CD4-positive, alpha-beta T cell (primary cell): ENCODE measurements at regions of chr1 and their contacts with region 1.

Region 1: DNA sequence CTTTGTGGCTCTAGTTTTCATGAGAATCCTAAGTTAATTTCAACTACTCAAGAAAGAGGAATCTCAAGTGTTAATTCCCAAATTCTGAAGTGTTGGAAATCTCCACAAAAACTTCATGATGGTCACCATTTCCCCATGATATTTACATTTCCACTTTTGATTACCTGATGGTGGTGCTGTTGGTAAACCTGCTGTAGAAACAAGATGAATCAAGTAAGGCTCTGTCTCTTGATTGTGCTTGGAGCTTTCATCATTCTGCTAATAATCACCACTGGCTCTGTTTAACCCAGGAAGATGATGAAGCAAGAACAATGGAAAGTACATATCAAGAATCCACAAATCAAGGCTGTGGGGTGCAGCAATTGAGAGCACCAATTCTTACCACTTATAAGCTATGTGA is 77.8 kb downstream of the C4BPA start:
- DNase-seq: peak in 3 of 14 experiments; percentile 30 to 47 (median 42)
- ATAC-seq: no peak
- H3K4me3 ChIP-seq: no peak overlapping the region
- H3K4me3 Mint-ChIP-seq: no peak overlapping the region
- H3K27ac ChIP-seq: no peak overlapping the region
- H3K27ac Mint-ChIP-seq: no peak overlapping the region
- H3K4me1 ChIP-seq: no peaks in the 10 kb centered on the region
- H3K4me1 Mint-ChIP-seq: no peaks in the 10 kb centered on the region
- H3K27me3 ChIP-seq: no peaks in the 10 kb centered on the region
- H3K27me3 Mint-ChIP-seq: peaks cover 11% of the 10 kb centered on the region
- CTCF ChIP-seq: peak; percentile 55

Region 2: DNA sequence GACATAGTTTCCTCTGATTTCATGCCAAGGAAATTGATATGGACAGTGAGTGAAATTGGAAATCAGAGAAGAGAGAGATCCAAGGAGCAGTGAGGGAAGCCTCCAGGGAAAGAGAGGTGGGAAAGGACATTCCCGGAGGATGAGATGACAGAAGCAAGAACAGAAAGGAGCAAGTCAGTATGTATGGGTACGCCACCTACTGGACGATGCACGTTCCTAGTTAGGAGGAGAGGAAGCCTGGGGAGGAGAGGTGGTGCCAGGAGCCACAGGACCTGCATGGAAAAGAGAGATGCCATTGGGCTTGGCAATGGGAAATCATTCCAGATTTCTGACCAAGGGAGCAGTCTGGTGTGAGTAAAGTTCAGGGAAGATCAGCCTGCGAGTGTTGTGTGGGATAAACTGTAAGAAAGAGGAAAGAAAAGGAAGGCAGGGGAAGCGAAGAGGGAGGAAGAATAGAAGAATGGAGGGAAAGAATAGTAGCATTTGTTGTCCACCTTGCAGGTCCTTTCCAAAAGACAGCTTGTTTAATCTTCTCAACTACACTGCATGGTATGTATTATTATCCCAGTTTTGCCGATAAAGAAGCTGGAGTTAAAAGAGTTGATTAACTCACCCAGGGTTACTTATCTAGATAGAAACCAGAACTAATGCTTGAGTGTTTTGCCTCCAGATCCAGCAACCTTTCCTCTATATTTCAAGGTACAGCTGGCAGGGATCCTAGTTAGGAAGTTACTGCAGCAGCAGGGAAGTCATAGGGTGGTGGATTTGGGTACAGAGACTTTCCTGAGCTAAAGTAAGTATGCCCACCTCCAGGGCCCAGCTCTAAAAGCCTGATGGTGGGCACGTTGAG is 176.6 kb before region 1 on chr1:
- CTCF ChIA-PET with region 1: no interaction called
- POLR2A ChIA-PET with region 1: no interaction called
- intact Hi-C with region 1: no loop called
- DNase-seq: peak; percentile 7 to 63 (median 20)
- ATAC-seq: no peak
- H3K4me3 ChIP-seq: no peak overlapping the region
- H3K4me3 Mint-ChIP-seq: no peak overlapping the region
- H3K27ac ChIP-seq: no peak overlapping the region
- H3K27ac Mint-ChIP-seq: no peak overlapping the region
- H3K4me1 ChIP-seq: no peaks in the 10 kb centered on the region
- H3K4me1 Mint-ChIP-seq: no peaks in the 10 kb centered on the region
- H3K27me3 ChIP-seq: no peaks in the 10 kb centered on the region
- H3K27me3 Mint-ChIP-seq: peaks cover 3% of the 10 kb centered on the region
- CTCF ChIP-seq: peak; percentile 76

Region 3: DNA sequence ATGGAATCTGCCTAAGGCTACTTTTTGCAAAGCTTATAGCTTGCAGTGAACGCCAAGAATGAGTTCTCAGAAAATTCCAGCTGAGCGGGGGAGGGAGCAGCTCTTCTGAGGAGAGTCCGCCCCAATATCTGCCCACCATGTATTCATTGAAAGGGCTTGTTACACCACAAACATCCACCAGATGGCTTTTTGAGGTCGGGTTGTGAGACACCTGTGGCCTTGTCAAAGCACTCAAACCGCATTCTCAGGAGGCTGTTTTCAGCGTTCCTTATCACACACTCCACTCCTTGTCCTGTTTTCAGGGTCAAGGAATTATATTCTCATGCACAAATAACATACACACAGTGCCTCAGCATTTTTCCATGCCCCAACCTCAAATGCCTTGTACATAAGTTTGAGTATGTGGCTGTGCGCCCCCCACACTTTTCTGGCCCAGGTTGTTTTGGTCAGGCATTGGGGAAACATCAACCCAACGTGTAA is 97.1 kb before region 1 on chr1:
- CTCF ChIA-PET with region 1: no interaction called
- POLR2A ChIA-PET with region 1: no interaction called
- intact Hi-C with region 1: loop called in 1 of 2 experiments (anchors 5 kb)
- DNase-seq: peak; percentile 19 to 83 (median 40)
- ATAC-seq: peak; percentile 77
- H3K4me3 ChIP-seq: no peak overlapping the region
- H3K4me3 Mint-ChIP-seq: no peak overlapping the region
- H3K27ac ChIP-seq: no peak overlapping the region
- H3K27ac Mint-ChIP-seq: no peak overlapping the region
- H3K4me1 ChIP-seq: peaks cover 10% of the 10 kb centered on the region
- H3K4me1 Mint-ChIP-seq: peaks cover 21% of the 10 kb centered on the region
- H3K27me3 ChIP-seq: no peaks in the 10 kb centered on the region
- H3K27me3 Mint-ChIP-seq: peaks cover 35% of the 10 kb centered on the region
- CTCF ChIP-seq: peak; percentile 68

Region 4: DNA sequence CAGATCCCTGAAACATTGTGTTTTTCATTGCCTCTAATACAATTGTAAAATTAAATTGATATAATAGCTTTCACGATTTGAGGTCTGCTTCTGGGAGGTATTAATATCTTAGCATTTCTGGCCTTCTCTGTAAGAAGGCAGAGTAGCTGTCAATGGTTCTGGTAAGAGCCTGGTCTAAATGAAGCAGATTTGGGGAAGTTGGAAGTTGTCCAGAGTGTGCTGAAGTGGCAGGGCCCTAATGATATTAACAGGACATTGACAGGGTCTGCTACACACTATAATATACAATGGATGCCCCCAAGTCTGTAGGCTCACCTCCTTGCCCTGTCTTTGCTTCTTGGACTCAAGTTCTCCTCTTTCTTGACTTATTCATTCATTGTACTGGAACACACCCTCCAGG is 21.7 kb after region 1 on chr1:
- CTCF ChIA-PET with region 1: no interaction called
- POLR2A ChIA-PET with region 1: no interaction called
- intact Hi-C with region 1: loop called in 1 of 2 experiments (anchors 2 kb)
- DNase-seq: no peak
- ATAC-seq: no peak
- H3K4me3 ChIP-seq: no peak overlapping the region
- H3K4me3 Mint-ChIP-seq: no peak overlapping the region
- H3K27ac ChIP-seq: no peak overlapping the region
- H3K27ac Mint-ChIP-seq: no peak overlapping the region
- H3K4me1 ChIP-seq: peaks cover 4% of the 10 kb centered on the region
- H3K4me1 Mint-ChIP-seq: peaks cover 5% of the 10 kb centered on the region
- H3K27me3 ChIP-seq: no peaks in the 10 kb centered on the region
- H3K27me3 Mint-ChIP-seq: peaks cover 2% of the 10 kb centered on the region
- CTCF ChIP-seq: no peak

Region 5: DNA sequence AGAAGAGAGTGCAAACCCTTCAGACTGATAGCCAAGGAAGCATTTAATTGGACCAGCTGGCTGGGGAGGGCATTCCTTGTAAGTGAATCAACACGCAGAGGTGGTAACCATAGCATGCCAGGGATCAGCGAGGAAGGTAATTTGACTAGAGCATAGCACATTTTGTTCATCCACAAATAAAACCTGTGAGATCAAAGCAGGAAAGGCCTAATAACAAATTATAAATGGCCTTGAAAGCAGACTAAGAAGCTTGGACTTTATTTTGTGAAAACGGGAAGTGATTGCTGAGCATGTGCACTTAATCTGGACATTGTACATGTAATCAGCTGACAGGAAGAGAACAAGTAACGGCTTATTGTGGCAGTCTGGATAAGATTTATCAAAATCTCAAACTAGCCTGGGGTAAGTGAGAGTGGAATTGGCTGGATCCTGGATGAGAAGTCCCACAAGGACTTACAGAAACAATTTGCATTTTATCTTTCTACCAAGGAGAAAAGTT is 128.0 kb after region 1 on chr1:
- CTCF ChIA-PET with region 1: no interaction called
- POLR2A ChIA-PET with region 1: no interaction called
- intact Hi-C with region 1: loop called in 1 of 2 experiments (anchors 10 kb)
- DNase-seq: peak in 2 of 14 experiments; percentile 22 to 26
- ATAC-seq: no peak
- H3K4me3 ChIP-seq: no peak overlapping the region
- H3K4me3 Mint-ChIP-seq: peak overlapping the region; percentile 32
- H3K27ac ChIP-seq: no peak overlapping the region
- H3K27ac Mint-ChIP-seq: peak overlapping the region; percentile 70
- H3K4me1 ChIP-seq: peaks cover 5% of the 10 kb centered on the region
- H3K4me1 Mint-ChIP-seq: peaks cover 22% of the 10 kb centered on the region
- H3K27me3 ChIP-seq: no peaks in the 10 kb centered on the region
- H3K27me3 Mint-ChIP-seq: no peaks in the 10 kb centered on the region
- CTCF ChIP-seq: no peak

Region 6: DNA sequence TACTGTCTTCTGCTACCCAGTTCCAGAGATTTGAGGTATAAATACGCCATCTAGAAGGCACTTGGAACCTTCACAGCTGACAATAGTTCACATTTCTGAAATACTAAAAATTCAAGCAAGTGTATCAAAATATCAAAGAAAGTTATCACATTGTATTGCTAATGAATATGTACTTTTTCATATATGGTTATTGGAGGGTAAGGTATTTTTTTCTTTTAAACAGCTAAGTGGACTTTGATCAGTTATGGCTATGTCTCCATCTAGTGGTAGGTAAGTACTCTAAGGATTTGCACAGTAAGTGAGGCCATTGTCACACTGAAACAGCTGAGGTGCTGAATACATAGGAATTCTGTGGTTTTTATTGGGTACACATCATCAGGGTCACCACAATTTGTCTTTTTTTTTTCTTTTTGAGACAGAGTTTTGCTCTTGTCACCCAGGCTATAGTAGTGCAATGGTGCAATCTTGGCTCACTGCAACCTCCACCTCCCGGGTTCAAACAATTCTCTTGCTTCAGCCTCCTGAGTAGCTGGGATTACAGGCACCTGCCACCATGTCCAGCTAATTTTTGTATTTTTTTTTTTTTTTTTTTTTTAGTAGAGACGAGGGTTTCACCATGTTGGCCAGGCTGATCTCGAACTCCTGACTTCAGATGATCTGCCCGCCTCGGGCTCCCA is 223.1 kb after region 1 on chr1:
- CTCF ChIA-PET with region 1: interaction called, 17 read pairs
- POLR2A ChIA-PET with region 1: interaction called, 3 read pairs
- intact Hi-C with region 1: loop called (anchors 1 to 2 kb)
- DNase-seq: peak in 4 of 14 experiments; percentile 11 to 79 (median 72)
- ATAC-seq: peak; percentile 79
- H3K4me3 ChIP-seq: no peak overlapping the region
- H3K4me3 Mint-ChIP-seq: no peak overlapping the region
- H3K27ac ChIP-seq: no peak overlapping the region
- H3K27ac Mint-ChIP-seq: no peak overlapping the region
- H3K4me1 ChIP-seq: no peaks in the 10 kb centered on the region
- H3K4me1 Mint-ChIP-seq: no peaks in the 10 kb centered on the region
- H3K27me3 ChIP-seq: no peaks in the 10 kb centered on the region
- H3K27me3 Mint-ChIP-seq: no peaks in the 10 kb centered on the region
- CTCF ChIP-seq: peak; percentile 81

Region 7: GRCh38 chr1:208054485-208054884 is 872.6 kb after region 1 on chr1:
- CTCF ChIA-PET with region 1: no interaction called
- POLR2A ChIA-PET with region 1: no interaction called
- intact Hi-C with region 1: no loop called
- DNase-seq: no peak
- ATAC-seq: no peak
- H3K4me3 ChIP-seq: no peak overlapping the region
- H3K4me3 Mint-ChIP-seq: no peak overlapping the region
- H3K27ac ChIP-seq: no peak overlapping the region
- H3K27ac Mint-ChIP-seq: no peak overlapping the region
- H3K4me1 ChIP-seq: no peaks in the 10 kb centered on the region
- H3K4me1 Mint-ChIP-seq: no peaks in the 10 kb centered on the region
- H3K27me3 ChIP-seq: no peaks in the 10 kb centered on the region
- H3K27me3 Mint-ChIP-seq: peaks cover 13% of the 10 kb centered on the region
- CTCF ChIP-seq: no peak